ENCODE measurements at regions of chr9 and their contacts with region 1.

Region 1: DNA sequence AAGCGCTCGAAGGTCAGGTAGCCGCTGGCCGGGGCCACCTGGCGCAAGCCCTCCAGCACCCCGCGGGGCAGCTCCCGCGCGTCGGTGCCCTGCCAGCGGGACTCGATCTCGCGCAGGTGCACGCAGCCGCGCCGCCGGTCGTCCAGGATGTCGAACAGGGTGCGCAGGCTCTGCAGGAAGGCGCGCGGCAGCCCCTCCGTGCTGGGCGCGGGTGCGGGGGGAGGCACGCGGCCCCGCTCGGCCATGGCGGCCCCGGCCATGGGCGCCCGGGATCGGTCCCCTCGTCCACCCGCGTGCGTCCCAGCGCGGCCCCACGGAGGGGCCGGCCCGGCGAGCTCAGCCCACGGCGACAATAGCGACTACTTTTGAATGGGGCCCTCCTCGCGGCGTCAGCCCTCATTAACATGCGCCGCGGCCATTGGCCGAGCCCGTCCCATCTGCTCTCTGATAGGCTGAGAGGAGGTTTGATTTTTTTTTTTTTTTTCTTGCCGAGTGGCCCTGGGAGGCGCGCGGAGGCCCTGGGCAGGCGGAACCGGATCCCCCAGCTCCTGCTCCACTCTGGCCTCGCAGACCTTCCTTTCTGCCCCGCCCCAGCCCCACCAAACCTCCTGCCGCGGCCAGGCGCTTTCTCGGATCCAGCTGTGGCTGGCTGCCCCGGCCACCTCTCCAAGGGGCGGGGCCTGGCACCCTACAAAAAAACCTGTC is at the start of gene SAPCD2:
- DNase-seq: peak; percentile 93
- ATAC-seq: peak; percentile 85
- H3K4me3 ChIP-seq: peak within 1 kb of the TSS in 4 of 5 experiments; percentile 36 to 47 (median 44)
- H3K4me3 Mint-ChIP-seq: peak within 1 kb of the TSS; percentile 82
- H3K27ac ChIP-seq: no peak within 1 kb of the TSS
- H3K27ac Mint-ChIP-seq: peak within 1 kb of the TSS; percentile 81
- H3K4me1 ChIP-seq: peaks cover 19 to 36% of the 10 kb centered on the region in 2 donors
- H3K4me1 Mint-ChIP-seq: peaks cover 26% of the 10 kb centered on the region
- H3K27me3 ChIP-seq: peaks cover 0 to 15% (median 1%) of the 10 kb centered on the region in 4 experiments
- H3K27me3 Mint-ChIP-seq: peaks cover 3% of the 10 kb centered on the region
- CTCF ChIP-seq: no peak
- total RNA-seq, gene SAPCD2: 0.39 and 0.73 TPM in 2 replicates

Region 2: GRCh38 chr9:137046098-137046787 is 24.1 kb before region 1 on chr9 and contains the start of gene NPDC1:
- CTCF ChIA-PET with region 1: interaction called, 61 read pairs
- POLR2A ChIA-PET with region 1: interaction called, 4 read pairs
- intact Hi-C with region 1: loop called (anchors 1 kb)
- DNase-seq: peak; percentile 89
- ATAC-seq: peak; percentile 96
- H3K4me3 ChIP-seq: peak within 1 kb of the TSS in 3 of 5 experiments; percentile 18 to 46 (median 23)
- H3K4me3 Mint-ChIP-seq: peak within 1 kb of the TSS; percentile 47
- H3K27ac ChIP-seq: no peak within 1 kb of the TSS
- H3K27ac Mint-ChIP-seq: peak within 1 kb of the TSS; percentile 15
- H3K4me1 ChIP-seq: peaks cover 24 to 42% of the 10 kb centered on the region in 2 donors
- H3K4me1 Mint-ChIP-seq: peaks cover 10% of the 10 kb centered on the region
- H3K27me3 ChIP-seq: peaks cover 0 to 86% (median 53%) of the 10 kb centered on the region in 4 experiments
- H3K27me3 Mint-ChIP-seq: peaks cover 17% of the 10 kb centered on the region
- CTCF ChIP-seq: peak; percentile 87
- total RNA-seq, gene NPDC1: 0.17 and 0.39 TPM in 2 replicates

Region 3: GRCh38 chr9:137086531-137087408 is 16.4 kb after region 1 on chr9 and contains the start of gene MAN1B1:
- CTCF ChIA-PET with region 1: interaction called, 19 read pairs
- POLR2A ChIA-PET with region 1: interaction called, 19 read pairs
- intact Hi-C with region 1: loop called (anchors 1 kb)
- DNase-seq: peak; percentile 100
- ATAC-seq: peak; percentile 79
- H3K4me3 ChIP-seq: peak within 1 kb of the TSS; percentile 42 to 83 (median 74)
- H3K4me3 Mint-ChIP-seq: peak within 1 kb of the TSS; percentile 97
- H3K27ac ChIP-seq: peak within 1 kb of the TSS; percentile 88 to 97
- H3K27ac Mint-ChIP-seq: peak within 1 kb of the TSS; percentile 98
- H3K4me1 ChIP-seq: peaks cover 18 to 41% of the 10 kb centered on the region in 2 donors
- H3K4me1 Mint-ChIP-seq: peaks cover 40% of the 10 kb centered on the region
- H3K27me3 ChIP-seq: no peaks in the 10 kb centered on the region
- H3K27me3 Mint-ChIP-seq: no peaks in the 10 kb centered on the region
- CTCF ChIP-seq: no peak
- total RNA-seq, gene MAN1B1: 68.4 and 80.9 TPM in 2 replicates

Region 4: DNA sequence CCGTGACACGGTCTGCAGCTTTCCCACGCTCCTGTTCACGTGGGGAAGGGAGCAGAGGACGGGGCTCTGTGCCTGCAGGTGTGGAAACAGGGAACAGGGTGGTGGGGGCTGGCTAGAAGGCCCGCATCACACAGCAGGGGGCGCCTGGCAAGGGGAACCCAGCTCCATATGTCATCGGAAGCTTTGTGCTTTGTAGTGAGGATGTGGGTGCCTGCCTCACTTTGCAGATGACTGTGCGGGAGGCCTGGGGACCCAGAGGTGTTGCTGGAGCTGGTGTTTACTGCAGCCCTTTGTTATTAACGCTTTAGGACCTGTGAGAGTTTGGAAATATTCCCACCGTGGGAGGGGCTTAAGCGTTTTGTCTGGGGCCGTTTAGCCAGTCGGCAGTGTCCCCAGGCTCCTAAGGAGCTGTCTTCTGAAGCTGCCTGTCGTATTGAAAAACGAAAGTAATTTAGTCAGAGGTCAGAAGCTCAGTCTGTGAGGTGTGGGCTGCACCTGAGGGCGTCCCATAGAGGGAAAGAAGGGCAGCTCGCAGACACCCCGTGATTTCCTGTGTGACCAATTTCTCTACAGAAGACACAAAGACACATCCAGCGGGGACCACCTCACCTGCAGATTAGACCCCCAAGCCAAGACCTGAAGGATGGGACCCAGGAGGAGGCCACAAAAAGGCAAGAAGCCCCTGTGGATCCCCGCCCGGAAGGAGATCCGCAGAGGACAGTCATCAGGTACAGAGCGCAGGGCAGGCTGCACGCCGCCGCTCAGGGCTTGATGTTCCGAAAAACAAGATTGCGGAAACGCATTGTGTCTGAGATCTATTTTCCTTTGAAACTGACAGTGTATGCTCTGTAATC is 25.5 kb after region 1 on chr9:
- CTCF ChIA-PET with region 1: interaction called, 10 read pairs
- POLR2A ChIA-PET with region 1: no interaction called
- intact Hi-C with region 1: no loop called
- DNase-seq: peak; percentile 70
- ATAC-seq: peak; percentile 96
- H3K4me3 ChIP-seq: peak overlapping the region in 2 of 5 experiments; percentile 15 to 30
- H3K4me3 Mint-ChIP-seq: peak overlapping the region; percentile 72
- H3K27ac ChIP-seq: peak overlapping the region; percentile 41 to 44
- H3K27ac Mint-ChIP-seq: peak overlapping the region; percentile 72
- H3K4me1 ChIP-seq: peaks cover 0 to 12% of the 10 kb centered on the region in 2 donors
- H3K4me1 Mint-ChIP-seq: peaks cover 6% of the 10 kb centered on the region
- H3K27me3 ChIP-seq: no peaks in the 10 kb centered on the region
- H3K27me3 Mint-ChIP-seq: no peaks in the 10 kb centered on the region
- CTCF ChIP-seq: peak; percentile 49

Region 5: GRCh38 chr9:137123468-137123837 is 53.1 kb after region 1 on chr9:
- CTCF ChIA-PET with region 1: interaction called, 3 read pairs
- POLR2A ChIA-PET with region 1: interaction called, 14 read pairs
- intact Hi-C with region 1: no loop called
- DNase-seq: no peak
- ATAC-seq: no peak
- H3K4me3 ChIP-seq: peak overlapping the region in 1 of 5 experiments; percentile 1
- H3K4me3 Mint-ChIP-seq: peak overlapping the region; percentile 72
- H3K27ac ChIP-seq: peak overlapping the region in 1 of 2 donors; percentile 84
- H3K27ac Mint-ChIP-seq: peak overlapping the region; percentile 89
- H3K4me1 ChIP-seq: peaks cover 53 to 64% of the 10 kb centered on the region in 2 donors
- H3K4me1 Mint-ChIP-seq: peaks cover 54% of the 10 kb centered on the region
- H3K27me3 ChIP-seq: no peaks in the 10 kb centered on the region
- H3K27me3 Mint-ChIP-seq: no peaks in the 10 kb centered on the region
- CTCF ChIP-seq: no peak

Region 6: GRCh38 chr9:137200311-137201204 is 130.2 kb after region 1 on chr9 and contains the start of gene TPRN:
- CTCF ChIA-PET with region 1: no interaction called
- POLR2A ChIA-PET with region 1: no interaction called
- intact Hi-C with region 1: loop called (anchors 1 kb)
- DNase-seq: peak; percentile 99
- ATAC-seq: peak; percentile 95
- H3K4me3 ChIP-seq: peak within 1 kb of the TSS; percentile 12 to 80 (median 75)
- H3K4me3 Mint-ChIP-seq: peak within 1 kb of the TSS; percentile 88
- H3K27ac ChIP-seq: peak within 1 kb of the TSS; percentile 78 to 89
- H3K27ac Mint-ChIP-seq: peak within 1 kb of the TSS; percentile 90
- H3K4me1 ChIP-seq: peaks cover 31 to 41% of the 10 kb centered on the region in 2 donors
- H3K4me1 Mint-ChIP-seq: peaks cover 29% of the 10 kb centered on the region
- H3K27me3 ChIP-seq: peaks cover 0 to 6% (median 0%) of the 10 kb centered on the region in 4 experiments
- H3K27me3 Mint-ChIP-seq: no peaks in the 10 kb centered on the region
- CTCF ChIP-seq: no peak
- total RNA-seq, gene TPRN: 16.3 and 19.3 TPM in 2 replicates

Measured in B cell (primary cell).